ENCODE measurements at regions of chr9 and their contacts with region 1.

Region 1: DNA sequence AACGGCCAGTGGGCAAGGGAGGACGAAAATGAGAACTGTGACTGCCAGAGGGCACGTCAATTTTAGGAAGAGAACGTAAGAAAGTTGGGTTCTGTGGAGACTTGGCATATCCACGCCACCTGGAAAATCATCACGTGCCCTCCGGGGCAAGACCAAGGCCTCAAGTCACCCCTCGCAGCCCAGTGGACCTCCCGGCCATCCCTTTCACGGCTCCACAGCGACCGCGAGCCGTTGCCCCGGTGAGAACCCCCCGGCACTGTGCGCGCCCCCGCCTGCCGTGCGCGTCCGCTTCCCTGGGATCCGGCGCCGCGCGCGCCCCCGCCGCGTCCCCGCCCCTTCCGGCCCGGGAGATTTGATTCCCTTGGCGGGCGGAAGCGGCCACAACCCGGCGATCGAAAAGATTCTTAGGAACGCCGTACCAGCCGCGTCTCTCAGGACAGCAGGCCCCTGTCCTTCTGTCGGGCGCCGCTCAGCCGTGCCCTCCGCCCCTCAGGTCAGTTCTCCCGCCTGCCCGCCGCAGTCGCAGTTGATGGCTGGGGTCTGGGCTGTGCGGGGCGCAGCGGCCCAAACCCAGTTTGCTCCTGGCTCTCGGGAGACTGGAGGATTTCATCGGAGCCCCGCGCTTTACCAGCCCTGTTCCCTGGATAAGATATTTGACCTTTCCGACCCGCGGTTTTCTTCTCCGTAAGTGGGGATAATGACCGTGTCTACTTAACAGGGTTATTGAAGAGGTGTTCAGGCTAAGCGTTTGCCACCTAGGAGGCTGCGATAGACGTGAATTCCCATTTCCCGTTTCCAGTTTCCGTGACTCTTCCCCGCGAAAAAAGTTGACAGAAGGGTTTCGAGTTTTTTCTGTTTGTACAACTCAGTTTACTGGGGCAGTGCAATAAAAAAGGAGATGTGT is at the start of gene MELK:
- DNase-seq: peak; percentile 90
- ATAC-seq: peak; percentile 97
- total RNA-seq, gene MELK: 0.76 TPM

Region 2: DNA sequence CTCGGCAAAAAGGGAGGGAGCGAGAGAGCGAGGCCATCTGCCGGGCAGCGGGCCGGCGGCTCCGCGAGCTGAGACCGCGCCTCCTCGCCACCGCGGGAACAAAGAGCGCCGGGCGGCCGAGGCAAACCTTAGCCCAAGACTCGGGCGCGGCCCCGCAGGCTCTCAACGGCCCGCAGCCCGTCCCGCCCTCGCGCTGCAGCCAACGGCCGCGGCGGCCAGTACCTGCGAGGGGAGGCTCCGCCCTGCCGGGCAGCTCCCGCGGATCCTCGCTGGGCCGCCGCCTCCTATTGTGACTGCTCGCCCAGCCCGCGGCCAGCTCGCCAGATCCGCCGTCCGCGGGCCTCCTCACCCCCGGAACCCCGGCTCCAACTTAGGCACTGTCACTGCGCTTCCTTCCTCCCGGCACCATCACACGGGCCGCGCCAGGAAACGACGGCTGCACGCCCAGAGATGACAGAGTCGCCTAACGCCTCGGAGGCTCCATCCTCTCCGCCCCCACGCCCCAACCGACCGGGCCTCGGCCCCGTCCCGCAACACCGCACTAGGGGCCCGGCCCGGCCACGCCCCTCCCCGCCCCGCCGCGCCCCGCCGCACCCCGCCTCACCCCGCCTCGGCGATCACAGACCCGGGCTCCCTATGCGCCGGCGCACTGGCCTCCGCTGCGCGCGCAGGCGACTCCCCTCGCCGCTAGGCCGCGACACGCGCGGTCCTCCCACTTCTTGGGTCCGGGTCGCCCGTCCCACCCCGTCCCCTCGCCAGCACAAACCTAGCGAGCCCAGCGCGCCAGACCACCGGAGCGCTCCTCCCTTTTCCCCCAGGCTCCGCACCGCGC is 172.2 kb before region 1 on chr9:
- intact Hi-C with region 1: loop called (anchors 5 kb)
- DNase-seq: peak; percentile 96
- ATAC-seq: peak; percentile 94